Calu3 (cell line): ENCODE measurements at regions of chr11 and their contacts with region 1.

Region 1: GRCh38 chr11:104254347-104254746 is 90.4 kb upstream of the PDGFD start:
- DNase-seq: peak; percentile 40
- H3K4me3 Mint-ChIP-seq: no peak overlapping the region
- H3K27ac Mint-ChIP-seq: no peak overlapping the region
- H3K4me1 Mint-ChIP-seq: no peaks in the 10 kb centered on the region
- H3K27me3 Mint-ChIP-seq: no peaks in the 10 kb centered on the region
- CTCF ChIP-seq: peak; percentile 30

Region 2: DNA sequence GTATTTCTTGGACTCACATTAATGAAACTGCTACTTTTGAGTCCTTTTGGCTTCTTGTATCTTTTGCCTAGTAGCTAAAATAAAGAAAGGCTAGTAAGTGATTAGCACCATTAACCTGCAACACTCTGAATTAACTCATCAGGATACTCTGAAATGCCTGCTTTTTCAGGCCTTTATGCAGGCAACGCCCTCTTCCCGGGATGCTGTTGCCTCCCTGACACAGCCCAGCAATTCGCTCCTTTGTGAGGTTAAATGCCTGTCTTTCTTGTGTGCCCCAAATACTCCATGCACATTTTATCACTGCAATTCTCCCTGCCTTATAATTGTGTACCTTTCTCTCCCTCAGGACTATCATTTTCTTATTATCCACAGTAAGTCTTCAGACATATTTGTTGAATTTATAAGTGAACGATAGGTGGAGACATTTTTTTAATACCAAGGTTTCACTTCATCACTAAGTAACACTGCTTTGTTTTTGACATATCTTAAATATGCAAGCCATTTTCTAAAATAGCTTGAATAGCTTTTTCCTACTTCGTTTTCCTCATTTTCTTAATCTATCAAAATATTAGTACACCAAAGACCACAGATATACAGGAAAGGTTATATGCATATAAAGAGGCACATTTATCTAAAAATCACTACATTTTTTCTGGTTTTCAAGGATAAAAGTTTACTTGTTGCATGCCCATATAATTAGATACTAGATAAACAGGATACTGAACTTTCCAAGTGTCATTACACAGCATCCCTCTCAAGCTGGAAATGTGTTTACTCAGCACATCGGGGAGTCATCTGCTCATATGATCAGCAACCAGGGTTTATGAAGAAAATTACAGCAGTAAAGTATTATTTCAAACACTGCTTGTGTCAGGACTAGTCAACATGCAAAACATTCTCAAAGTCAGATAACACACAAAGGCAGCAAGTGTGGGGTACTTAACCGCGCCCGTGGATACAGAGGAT is 266.4 kb before region 1 on chr11:
- CTCF ChIA-PET with region 1: no interaction called
- intact Hi-C with region 1: no loop called
- DNase-seq: no peak
- H3K4me3 Mint-ChIP-seq: no peak overlapping the region
- H3K27ac Mint-ChIP-seq: no peak overlapping the region
- H3K4me1 Mint-ChIP-seq: no peaks in the 10 kb centered on the region
- H3K27me3 Mint-ChIP-seq: no peaks in the 10 kb centered on the region
- CTCF ChIP-seq: no peak

Region 3: DNA sequence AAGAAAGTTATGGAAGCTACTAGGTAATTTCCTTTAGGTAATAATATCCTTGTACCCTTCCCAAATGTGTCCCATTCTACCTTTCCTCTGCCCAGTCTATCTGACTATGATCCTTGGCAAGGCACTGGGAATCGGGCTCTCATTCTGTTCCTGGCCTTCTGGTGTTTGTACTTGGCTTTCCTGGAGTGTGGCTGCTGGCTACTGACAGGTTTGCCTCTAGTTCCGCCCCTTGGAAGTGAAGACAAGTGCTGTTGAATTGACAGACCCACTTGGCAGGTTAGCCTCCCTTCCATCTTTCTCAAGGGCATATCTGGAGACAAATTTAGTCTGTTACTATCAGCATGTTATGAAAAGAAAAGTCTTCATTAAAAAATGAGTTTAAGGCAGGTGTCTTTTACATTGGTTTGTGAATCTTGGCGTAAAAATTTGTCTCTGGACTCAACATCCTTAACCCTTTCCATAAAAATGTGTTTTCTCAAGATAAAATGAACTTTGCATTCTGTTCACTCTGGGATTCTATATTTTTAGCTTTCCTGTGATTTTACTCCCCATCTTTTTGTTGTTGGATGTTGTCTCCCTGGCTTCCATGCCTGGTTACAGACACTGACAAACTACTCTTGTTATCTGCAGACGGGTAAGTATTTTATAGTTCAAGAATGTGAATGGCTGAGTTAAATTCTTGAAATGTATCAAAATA is 197.0 kb after region 1 on chr11:
- CTCF ChIA-PET with region 1: no interaction called
- intact Hi-C with region 1: loop called (anchors 10 kb)
- DNase-seq: peak; percentile 5
- H3K4me3 Mint-ChIP-seq: no peak overlapping the region
- H3K27ac Mint-ChIP-seq: peak overlapping the region; percentile 77
- H3K4me1 Mint-ChIP-seq: peaks cover 18% of the 10 kb centered on the region
- H3K27me3 Mint-ChIP-seq: no peaks in the 10 kb centered on the region
- CTCF ChIP-seq: no peak

Region 4: GRCh38 chr11:104581246-104581980 is 327.1 kb after region 1 on chr11:
- CTCF ChIA-PET with region 1: no interaction called
- intact Hi-C with region 1: loop called (anchors 10 kb)
- DNase-seq: no peak
- H3K4me3 Mint-ChIP-seq: no peak overlapping the region
- H3K27ac Mint-ChIP-seq: no peak overlapping the region
- H3K4me1 Mint-ChIP-seq: peaks cover 26% of the 10 kb centered on the region
- H3K27me3 Mint-ChIP-seq: no peaks in the 10 kb centered on the region
- CTCF ChIP-seq: no peak

Region 5: GRCh38 chr11:104705490-104706190 is 451.3 kb after region 1 on chr11:
- CTCF ChIA-PET with region 1: no interaction called
- intact Hi-C with region 1: loop called (anchors 10 kb)
- DNase-seq: peak; percentile 7
- H3K4me3 Mint-ChIP-seq: no peak overlapping the region
- H3K27ac Mint-ChIP-seq: peak overlapping the region; percentile 55
- H3K4me1 Mint-ChIP-seq: peaks cover 36% of the 10 kb centered on the region
- H3K27me3 Mint-ChIP-seq: no peaks in the 10 kb centered on the region
- CTCF ChIP-seq: no peak